GM12878 (cell line): ENCODE measurements at regions of chr1 and their contacts with region 1.

Region 1: DNA sequence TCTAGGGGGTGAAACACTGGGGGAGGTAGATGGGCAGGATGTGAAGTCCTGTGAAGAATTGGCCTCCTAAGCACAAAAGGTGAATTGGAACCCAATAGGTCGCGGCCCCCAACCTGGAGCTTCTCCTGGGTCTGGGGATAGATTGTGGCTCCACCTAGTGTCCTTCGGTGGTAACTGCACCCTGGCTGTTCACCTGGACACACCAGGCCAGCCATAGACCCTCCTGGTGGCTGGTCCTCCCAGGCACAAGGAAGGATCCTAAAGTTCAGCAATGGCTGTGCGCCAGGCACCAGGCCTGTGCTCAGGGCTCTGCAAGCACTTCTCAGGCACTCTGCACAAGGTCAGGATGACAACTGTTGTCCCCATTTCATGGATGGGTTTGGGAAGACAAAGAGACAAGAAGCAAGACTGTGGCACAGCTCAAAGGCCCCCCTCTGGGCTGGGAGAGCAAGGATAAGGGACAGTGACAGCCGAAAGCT is 13.5 kb downstream of the ESPN start:
- DNase-seq: peak; percentile 12
- ATAC-seq: peak; percentile 86
- H3K4me3 ChIP-seq: no peak overlapping the region
- H3K27ac ChIP-seq: no peak overlapping the region
- H3K4me1 ChIP-seq: no peaks in the 10 kb centered on the region
- H3K27me3 ChIP-seq: no peaks in the 10 kb centered on the region; a peak in 1 of 4 replicates
- CTCF ChIP-seq: peak; percentile 86 to 96 (median 87)
- EP300 ChIP-seq: no peak
- POLR2A ChIP-seq: no peak
- RAD21 ChIP-seq: peak; percentile 67

Region 2: GRCh38 chr1:6162773-6163172 is 275.3 kb before region 1 on chr1:
- CTCF ChIA-PET with region 1: no interaction called
- POLR2A ChIA-PET with region 1: no interaction called
- RAD21 ChIA-PET with region 1: no interaction called
- SMC1A ChIA-PET with region 1: no interaction called
- in situ Hi-C with region 1: no loop called
- intact Hi-C with region 1: no loop called
- DNase-seq: no peak
- ATAC-seq: peak; percentile 63
- H3K4me3 ChIP-seq: no peak overlapping the region
- H3K27ac ChIP-seq: no peak overlapping the region
- H3K4me1 ChIP-seq: no peaks in the 10 kb centered on the region
- H3K27me3 ChIP-seq: no peaks in the 10 kb centered on the region; a peak in 2 of 4 replicates
- CTCF ChIP-seq: peak in 1 of 3 experiments; percentile 15; a peak in 1 of 6 replicates
- EP300 ChIP-seq: no peak
- POLR2A ChIP-seq: no peak
- RAD21 ChIP-seq: no peak

Region 3: DNA sequence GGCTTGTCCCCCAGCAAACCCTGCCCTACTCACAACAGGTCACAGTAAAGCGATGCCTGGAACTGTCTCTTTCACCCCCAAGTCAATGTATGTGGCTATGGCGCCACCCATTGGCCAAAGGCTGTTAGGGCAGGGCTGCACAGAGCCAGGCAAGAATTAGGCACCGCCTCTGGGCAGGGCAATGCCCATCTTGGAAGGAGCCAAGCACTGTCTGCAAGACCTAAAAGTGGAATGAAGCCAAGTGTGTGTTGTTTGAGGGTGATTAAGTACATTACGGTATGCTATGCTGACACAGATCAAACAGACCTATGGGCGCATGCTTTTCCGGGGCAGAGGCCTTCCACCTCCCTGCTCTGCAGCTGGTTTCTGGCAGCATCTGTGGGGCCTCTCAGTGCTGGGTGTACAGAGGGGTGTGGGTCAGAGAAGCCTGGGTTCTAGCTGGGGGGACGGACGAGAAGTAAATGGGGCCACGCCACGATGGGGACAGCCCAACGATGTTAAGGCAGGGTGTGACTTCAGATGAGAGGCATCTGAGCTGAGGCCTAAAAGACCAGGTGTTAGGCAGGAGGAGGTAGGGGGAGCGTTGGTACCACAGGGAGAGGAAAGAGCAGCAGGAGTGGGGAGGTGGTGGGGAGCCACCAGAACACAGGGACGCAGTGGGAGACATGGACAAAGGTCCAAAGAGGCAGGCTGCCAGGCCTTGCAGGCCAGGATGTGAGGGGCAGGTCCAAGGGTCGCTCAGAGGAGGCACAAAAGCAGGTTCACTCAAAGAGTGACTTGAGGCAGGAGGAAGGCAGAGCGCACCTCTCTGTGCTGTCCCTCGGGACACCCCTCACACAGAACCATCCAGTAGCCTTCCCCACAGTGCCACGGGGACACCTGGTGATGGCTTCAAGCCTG is 94.3 kb before region 1 on chr1:
- CTCF ChIA-PET with region 1: interaction called, 18 read pairs
- POLR2A ChIA-PET with region 1: no interaction called
- RAD21 ChIA-PET with region 1: interaction called, 10 read pairs
- SMC1A ChIA-PET with region 1: interaction called, 3 read pairs
- in situ Hi-C with region 1: no loop called
- intact Hi-C with region 1: no loop called
- DNase-seq: no peak
- ATAC-seq: peak; percentile 94
- H3K4me3 ChIP-seq: no peak overlapping the region
- H3K27ac ChIP-seq: no peak overlapping the region
- H3K4me1 ChIP-seq: peaks cover 6% of the 10 kb centered on the region; the same call in 1 of the 2 replicates
- H3K27me3 ChIP-seq: no peaks in the 10 kb centered on the region
- CTCF ChIP-seq: peak; percentile 85 to 99 (median 87); a peak in 5 of 6 replicates
- EP300 ChIP-seq: no peak
- POLR2A ChIP-seq: no peak
- RAD21 ChIP-seq: peak; percentile 97

Region 4: GRCh38 chr1:6414443-6414844 is 23.6 kb before region 1 on chr1:
- CTCF ChIA-PET with region 1: interaction called, 137 read pairs
- POLR2A ChIA-PET with region 1: no interaction called
- RAD21 ChIA-PET with region 1: interaction called, 3 read pairs
- SMC1A ChIA-PET with region 1: interaction called, 6 read pairs
- in situ Hi-C with region 1: no loop called
- intact Hi-C with region 1: no loop called
- DNase-seq: peak; percentile 39
- ATAC-seq: peak; percentile 97
- H3K4me3 ChIP-seq: no peak overlapping the region
- H3K27ac ChIP-seq: peak overlapping the region; percentile 21; the same call in 1 of the 2 replicates
- H3K4me1 ChIP-seq: peaks cover 13% of the 10 kb centered on the region
- H3K27me3 ChIP-seq: peaks cover 4 to 7% of the 10 kb centered on the region in 2 experiments; a peak in 3 of 4 replicates
- CTCF ChIP-seq: peak; percentile 58 to 68 (median 68)
- EP300 ChIP-seq: 0 out of 4 replicates have a peak, but pooled peaks of 1 of the 2 experiments have one; percentile 36
- POLR2A ChIP-seq: no peak; the same call in 1 of the 2 replicates
- RAD21 ChIP-seq: no peak

Region 5: GRCh38 chr1:6423321-6423999 is 14.6 kb before region 1 on chr1:
- CTCF ChIA-PET with region 1: interaction called, 137 read pairs
- POLR2A ChIA-PET with region 1: interaction called, 3 read pairs
- RAD21 ChIA-PET with region 1: interaction called, 44 read pairs
- SMC1A ChIA-PET with region 1: interaction called, 17 read pairs
- in situ Hi-C with region 1: no loop called
- intact Hi-C with region 1: no loop called
- DNase-seq: no peak
- ATAC-seq: peak; percentile 75
- H3K4me3 ChIP-seq: no peak overlapping the region
- H3K27ac ChIP-seq: no peak overlapping the region
- H3K4me1 ChIP-seq: peaks cover 10% of the 10 kb centered on the region
- H3K27me3 ChIP-seq: peaks cover 18 to 22% of the 10 kb centered on the region in 2 experiments; a peak in 3 of 4 replicates
- CTCF ChIP-seq: peak; percentile 80 to 91 (median 85)
- EP300 ChIP-seq: no peak
- POLR2A ChIP-seq: no peak
- RAD21 ChIP-seq: peak; percentile 52